Motor neuron (in vitro differentiated cells): ENCODE measurements at regions of chr15 and their contacts with region 1.

Region 1: DNA sequence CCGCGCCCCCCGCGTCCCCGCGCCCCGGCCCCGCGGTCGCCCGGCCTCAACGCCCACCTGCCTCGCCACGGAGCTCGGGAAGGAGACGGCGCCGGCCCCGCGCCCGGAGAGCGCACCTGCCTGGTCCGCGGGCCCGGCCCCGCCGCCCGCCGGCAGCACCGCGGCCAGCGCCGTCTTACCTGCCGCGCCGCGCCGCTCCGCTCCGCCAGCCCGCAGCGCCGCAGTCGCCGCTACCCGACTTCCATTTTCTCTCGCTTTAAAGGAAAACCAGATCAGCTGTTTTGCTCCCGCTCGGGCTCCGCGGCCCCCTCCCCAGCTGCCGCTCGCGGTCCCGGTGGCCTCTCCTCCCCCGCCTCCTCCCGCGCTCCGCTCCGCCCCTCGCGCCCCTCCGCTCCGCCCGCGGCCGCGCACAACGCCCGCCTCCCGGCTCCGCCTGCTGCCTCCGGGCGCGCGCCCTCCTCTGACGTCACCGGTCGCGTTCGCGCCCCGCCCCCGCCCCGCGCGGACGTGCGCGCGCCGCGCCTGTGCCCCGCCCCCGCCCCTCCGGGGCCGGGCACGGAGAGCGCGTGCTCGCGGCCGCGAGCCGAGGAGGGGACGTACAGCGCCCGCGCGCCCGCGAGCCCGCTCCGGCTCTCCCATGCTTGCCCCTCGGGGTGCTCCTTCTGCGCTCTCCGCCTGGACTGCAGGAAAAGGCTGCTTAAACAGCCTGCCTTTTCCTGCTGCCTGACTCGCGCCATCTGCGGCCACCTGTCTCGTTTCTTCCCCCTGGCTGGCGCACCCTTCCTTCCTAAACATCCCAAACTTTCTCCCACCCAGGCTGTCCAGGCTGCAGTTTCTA is 159.8 kb upstream of the CHRNA7 start:
- ATAC-seq: peak; percentile 82 to 95 (median 92)
- H3K4me3 ChIP-seq: peak within 1 kb of the TSS; percentile 56 to 76 (median 64)
- H3K27ac ChIP-seq: peak within 1 kb of the TSS; percentile 67 to 68
- H3K4me1 ChIP-seq: peaks cover 4 to 8% of the 10 kb centered on the region in 2 donors

Region 2: DNA sequence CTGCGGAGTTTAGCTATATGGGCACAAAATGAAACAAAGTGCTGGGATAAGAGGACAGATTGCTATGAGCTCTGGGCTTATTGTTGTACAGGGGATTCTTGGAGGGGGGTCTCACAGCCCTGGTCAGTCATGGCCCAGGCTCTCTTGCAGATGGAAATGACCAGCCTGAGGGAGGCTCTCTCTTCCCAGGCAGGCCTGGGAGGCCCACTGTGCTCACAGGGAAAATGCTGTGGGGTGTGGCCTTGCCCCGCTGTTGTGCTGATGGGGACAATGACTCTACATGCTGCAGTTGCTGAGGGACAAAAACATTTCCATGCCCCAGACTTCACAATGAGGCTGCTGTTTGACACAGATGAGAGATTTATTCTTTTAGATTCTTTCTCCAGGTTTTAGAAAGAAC is 341.7 kb before region 1 on chr15:
- in situ Hi-C with region 1: no loop called
- ATAC-seq: peak in 7 of 8 experiments; percentile 34 to 80 (median 53)
- H3K4me3 ChIP-seq: no peak overlapping the region
- H3K27ac ChIP-seq: no peak overlapping the region
- H3K4me1 ChIP-seq: no peaks in the 10 kb centered on the region

Region 3: DNA sequence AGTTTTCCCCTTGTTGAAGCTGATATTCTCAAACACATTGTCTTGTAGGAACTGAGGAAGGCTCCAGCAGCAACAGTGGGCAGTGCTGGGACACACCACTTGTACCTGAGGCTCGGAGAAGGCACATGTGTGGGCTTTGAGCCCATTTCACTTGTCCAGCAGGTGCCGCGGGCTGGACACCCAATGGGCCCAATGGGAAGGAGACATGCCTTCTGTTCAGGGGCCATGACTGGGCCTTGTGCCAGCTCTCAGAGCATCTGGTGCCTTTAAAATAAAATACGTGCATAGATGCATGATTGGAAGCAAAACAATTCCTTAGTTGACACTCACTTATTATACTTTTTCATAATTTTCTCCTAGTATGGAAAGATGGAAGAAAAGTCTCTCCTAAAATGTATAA is 209.7 kb before region 1 on chr15:
- in situ Hi-C with region 1: loop called in 2 of 9 experiments (anchors 25 kb)
- ATAC-seq: peak in 2 of 8 experiments; percentile 33 to 63
- H3K4me3 ChIP-seq: no peak overlapping the region
- H3K27ac ChIP-seq: no peak overlapping the region
- H3K4me1 ChIP-seq: no peaks in the 10 kb centered on the region

Region 4: GRCh38 chr15:31758126-31758525 is 112.4 kb before region 1 on chr15:
- in situ Hi-C with region 1: loop called in 1 of 9 experiments (anchors 25 kb)
- ATAC-seq: peak in 3 of 8 experiments; percentile 77 to 87 (median 77)
- H3K4me3 ChIP-seq: no peak overlapping the region
- H3K27ac ChIP-seq: no peak overlapping the region
- H3K4me1 ChIP-seq: no peaks in the 10 kb centered on the region